ENCODE measurements at regions of chr12 and their contacts with region 1.

Region 1: GRCh38 chr12:6230321-6231110 is 30.3 kb downstream of the CD9 start:
- DNase-seq: peak; percentile 37 to 74
- H3K4me3 ChIP-seq: peak overlapping the region in 1 of 2 donors; percentile 32
- H3K27ac ChIP-seq: peak overlapping the region; percentile 93 to 94
- H3K4me1 ChIP-seq: peaks cover 44 to 81% of the 10 kb centered on the region in 2 donors
- H3K27me3 ChIP-seq: no peaks in the 10 kb centered on the region
- CTCF ChIP-seq: no peak

Region 2: GRCh38 chr12:6195665-6196535 is 34.6 kb before region 1 on chr12:
- intact Hi-C with region 1: loop called (anchors 1 kb)
- DNase-seq: peak; percentile 71 to 95
- H3K4me3 ChIP-seq: no peak overlapping the region
- H3K27ac ChIP-seq: peak overlapping the region; percentile 42 to 53
- H3K4me1 ChIP-seq: peaks cover 0 to 13% of the 10 kb centered on the region in 2 donors
- H3K27me3 ChIP-seq: no peaks in the 10 kb centered on the region
- CTCF ChIP-seq: peak; percentile 83 to 98 (median 97)

Region 3: GRCh38 chr12:6201826-6202225 is 28.7 kb before region 1 on chr12:
- intact Hi-C with region 1: loop called (anchors 1 kb)
- DNase-seq: no peak
- H3K4me3 ChIP-seq: peak overlapping the region; percentile 86 to 96
- H3K27ac ChIP-seq: peak overlapping the region; percentile 93 to 94
- H3K4me1 ChIP-seq: peaks cover 12 to 48% of the 10 kb centered on the region in 2 donors
- H3K27me3 ChIP-seq: no peaks in the 10 kb centered on the region
- CTCF ChIP-seq: no peak

Region 4: DNA sequence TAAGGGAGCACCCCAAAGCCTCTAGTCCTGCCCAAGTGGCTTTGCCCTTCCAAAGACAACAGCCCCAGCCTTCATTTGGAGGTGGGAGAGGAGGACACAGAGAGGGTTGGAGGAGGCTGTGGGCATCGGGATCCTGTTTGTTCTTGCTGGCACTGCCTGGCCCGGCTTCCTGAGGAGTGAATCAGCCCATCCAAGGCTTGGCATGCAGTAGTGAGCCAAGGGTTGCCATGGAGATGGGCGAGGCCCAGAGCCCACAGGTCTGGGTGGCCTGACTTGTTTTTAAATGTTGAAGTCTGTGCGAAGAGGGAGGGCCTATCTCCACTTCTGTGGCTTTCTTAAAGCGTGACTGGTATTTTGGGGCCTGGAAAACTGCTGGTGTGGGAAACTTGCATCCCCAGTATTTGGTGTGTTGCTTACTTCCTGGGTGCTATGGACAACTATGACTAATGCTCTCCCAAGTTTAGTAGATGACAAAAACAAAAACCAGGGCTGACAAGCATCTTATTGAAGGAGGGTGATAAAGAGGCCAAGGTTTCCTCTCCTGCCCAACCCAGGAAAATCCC is 14.5 kb before region 1 on chr12:
- intact Hi-C with region 1: loop called (anchors 1 kb)
- DNase-seq: peak; percentile 84 to 97
- H3K4me3 ChIP-seq: peak overlapping the region; percentile 25 to 32
- H3K27ac ChIP-seq: peak overlapping the region; percentile 93 to 94
- H3K4me1 ChIP-seq: peaks cover 30 to 89% of the 10 kb centered on the region in 2 donors
- H3K27me3 ChIP-seq: no peaks in the 10 kb centered on the region
- CTCF ChIP-seq: no peak

Region 5: GRCh38 chr12:6278439-6279255 is 48.1 kb after region 1 on chr12:
- intact Hi-C with region 1: loop called (anchors 2 kb)
- DNase-seq: peak; percentile 49 to 93
- H3K4me3 ChIP-seq: peak overlapping the region; percentile 59 to 63
- H3K27ac ChIP-seq: peak overlapping the region; percentile 82 to 85
- H3K4me1 ChIP-seq: peaks cover 8 to 23% of the 10 kb centered on the region in 2 donors
- H3K27me3 ChIP-seq: no peaks in the 10 kb centered on the region
- CTCF ChIP-seq: peak; percentile 53 to 100 (median 64)

Region 6: GRCh38 chr12:6335451-6336078 is 105.0 kb after region 1 on chr12:
- intact Hi-C with region 1: loop called (anchors 5 kb)
- DNase-seq: peak; percentile 65 to 94
- H3K4me3 ChIP-seq: peak overlapping the region; percentile 90 to 93
- H3K27ac ChIP-seq: peak overlapping the region; percentile 97 to 98
- H3K4me1 ChIP-seq: peaks cover 24 to 52% of the 10 kb centered on the region in 2 donors
- H3K27me3 ChIP-seq: no peaks in the 10 kb centered on the region
- CTCF ChIP-seq: peak; percentile 43 to 71 (median 69)

Region 7: DNA sequence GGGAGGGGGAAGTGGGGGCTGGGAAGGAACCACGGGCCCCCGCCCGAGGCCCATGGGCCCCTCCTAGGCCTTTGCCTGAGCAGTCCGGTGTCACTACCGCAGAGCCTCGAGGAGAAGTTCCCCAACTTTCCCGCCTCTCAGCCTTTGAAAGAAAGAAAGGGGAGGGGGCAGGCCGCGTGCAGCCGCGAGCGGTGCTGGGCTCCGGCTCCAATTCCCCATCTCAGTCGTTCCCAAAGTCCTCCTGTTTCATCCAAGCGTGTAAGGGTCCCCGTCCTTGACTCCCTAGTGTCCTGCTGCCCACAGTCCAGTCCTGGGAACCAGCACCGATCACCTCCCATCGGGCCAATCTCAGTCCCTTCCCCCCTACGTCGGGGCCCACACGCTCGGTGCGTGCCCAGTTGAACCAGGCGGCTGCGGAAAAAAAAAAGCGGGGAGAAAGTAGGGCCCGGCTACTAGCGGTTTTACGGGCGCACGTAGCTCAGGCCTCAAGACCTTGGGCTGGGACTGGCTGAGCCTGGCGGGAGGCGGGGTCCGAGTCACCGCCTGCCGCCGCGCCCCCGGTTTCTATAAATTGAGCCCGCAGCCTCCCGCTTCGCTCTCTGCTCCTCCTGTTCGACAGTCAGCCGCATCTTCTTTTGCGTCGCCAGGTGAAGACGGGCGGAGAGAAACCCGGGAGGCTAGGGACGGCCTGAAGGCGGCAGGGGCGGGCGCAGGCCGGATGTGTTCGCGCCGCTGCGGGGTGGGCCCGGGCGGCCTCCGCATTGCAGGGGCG is 303.6 kb after region 1 on chr12 and contains the start of gene GAPDH:
- intact Hi-C with region 1: loop called (anchors 10 kb)
- DNase-seq: peak; percentile 52 to 94
- H3K4me3 ChIP-seq: peak within 1 kb of the TSS; percentile 79 to 98
- H3K27ac ChIP-seq: peak within 1 kb of the TSS; percentile 98 to 99
- H3K4me1 ChIP-seq: peaks cover 19 to 30% of the 10 kb centered on the region in 2 donors
- H3K27me3 ChIP-seq: no peaks in the 10 kb centered on the region
- CTCF ChIP-seq: no peak
- total RNA-seq, gene GAPDH: 3,445 TPM